ENCODE measurements at regions of chr17 and their contacts with region 1.

Region 1: GRCh38 chr17:29589524-29590410 is at the start of gene GIT1:
- DNase-seq: peak; percentile 85 to 92
- ATAC-seq: peak; percentile 21 to 40
- H3K4me3 ChIP-seq: peak within 1 kb of the TSS; percentile 82
- H3K27ac ChIP-seq: peak within 1 kb of the TSS; percentile 95 to 96
- H3K4me1 ChIP-seq: peaks cover 56% of the 10 kb centered on the region
- CTCF ChIP-seq: no peak
- EP300 ChIP-seq: no peak
- POLR2A ChIP-seq: peak; percentile 63
- RAD21 ChIP-seq: no peak
- polyA plus RNA-seq, gene GIT1: 53.0 and 56.8 TPM in 2 replicates

Region 2: DNA sequence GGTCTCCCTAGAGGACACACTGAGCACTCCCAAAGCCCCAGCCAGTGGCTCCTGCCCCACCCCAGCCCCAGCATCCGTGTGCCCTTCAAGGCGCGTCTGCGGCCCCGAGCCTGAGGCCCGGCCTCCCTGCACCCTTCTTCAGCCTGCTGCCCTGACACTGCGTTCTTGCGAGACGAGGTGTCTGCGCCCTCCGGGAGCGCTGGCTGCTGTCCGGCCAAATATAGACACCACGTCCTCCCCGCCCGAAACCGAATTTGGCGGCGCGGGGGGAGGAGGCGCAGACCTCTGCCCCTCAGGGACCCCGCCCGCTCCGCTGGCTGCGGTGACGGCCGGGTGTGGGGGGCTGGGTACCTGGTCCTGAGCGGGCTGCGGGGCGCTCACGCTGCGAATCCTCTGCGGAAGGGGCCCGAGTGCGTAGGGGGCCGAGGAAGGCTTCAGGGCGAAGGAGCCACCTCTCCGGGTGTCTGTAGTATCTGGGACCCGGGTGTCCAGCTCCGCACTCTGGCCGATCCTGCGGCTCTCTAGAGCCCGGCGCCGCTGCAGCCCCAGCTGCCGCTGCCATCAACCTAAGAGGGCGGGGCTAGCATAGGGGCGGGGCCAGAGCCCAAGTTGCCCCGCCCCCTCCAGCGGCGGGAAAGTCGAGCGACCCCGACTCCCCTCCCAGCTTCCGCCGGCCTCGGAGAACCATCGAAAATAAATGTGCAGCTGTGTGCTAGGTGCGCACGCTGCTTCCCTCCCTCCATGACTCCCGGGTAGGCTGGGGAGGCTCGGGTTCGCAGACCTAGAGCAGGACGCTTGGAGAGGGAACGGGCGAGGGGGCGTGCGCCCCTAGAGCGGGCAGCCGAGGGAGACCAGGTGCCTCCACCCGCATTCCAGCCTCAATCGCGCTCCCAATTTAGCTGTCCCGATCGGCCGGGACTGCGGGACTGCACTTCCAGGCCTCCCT is 32.8 kb after region 1 on chr17 and contains the start of gene CORO6:
- CTCF ChIA-PET with region 1: interaction called, 447 read pairs
- POLR2A ChIA-PET with region 1: interaction called, 15 read pairs
- DNase-seq: peak; percentile 50 to 75
- ATAC-seq: peak; percentile 43 to 68
- H3K4me3 ChIP-seq: peak within 1 kb of the TSS; percentile 61
- H3K27ac ChIP-seq: peak within 1 kb of the TSS; percentile 56 to 83
- H3K4me1 ChIP-seq: peaks cover 38% of the 10 kb centered on the region
- CTCF ChIP-seq: no peak
- EP300 ChIP-seq: no peak
- POLR2A ChIP-seq: peak; percentile 39
- RAD21 ChIP-seq: no peak
- polyA plus RNA-seq, gene CORO6: 5.0 and 6.1 TPM in 2 replicates

Region 3: GRCh38 chr17:29713626-29714025 is 123.9 kb after region 1 on chr17:
- CTCF ChIA-PET with region 1: no interaction called
- POLR2A ChIA-PET with region 1: no interaction called
- DNase-seq: no peak
- ATAC-seq: no peak
- H3K4me3 ChIP-seq: no peak overlapping the region
- H3K27ac ChIP-seq: no peak overlapping the region
- H3K4me1 ChIP-seq: peaks cover 23% of the 10 kb centered on the region
- CTCF ChIP-seq: no peak
- EP300 ChIP-seq: no peak
- POLR2A ChIP-seq: no peak
- RAD21 ChIP-seq: no peak